Upper lobe of right lung (tissue), 1 donor: ENCODE measurements at regions of chr16 and their contacts with region 1.

Region 1: GRCh38 chr16:81737885-81738786 is 41.0 kb upstream of the PLCG2 start:
- DNase-seq: peak; percentile 83
- ATAC-seq: peak; percentile 95
- H3K4me3 ChIP-seq: peak overlapping the region; percentile 26
- H3K27ac ChIP-seq: no peak overlapping the region
- H3K4me1 ChIP-seq: peaks cover 9% of the 10 kb centered on the region
- H3K27me3 ChIP-seq: no peaks in the 10 kb centered on the region
- CTCF ChIP-seq: peak; percentile 82

Region 2: DNA sequence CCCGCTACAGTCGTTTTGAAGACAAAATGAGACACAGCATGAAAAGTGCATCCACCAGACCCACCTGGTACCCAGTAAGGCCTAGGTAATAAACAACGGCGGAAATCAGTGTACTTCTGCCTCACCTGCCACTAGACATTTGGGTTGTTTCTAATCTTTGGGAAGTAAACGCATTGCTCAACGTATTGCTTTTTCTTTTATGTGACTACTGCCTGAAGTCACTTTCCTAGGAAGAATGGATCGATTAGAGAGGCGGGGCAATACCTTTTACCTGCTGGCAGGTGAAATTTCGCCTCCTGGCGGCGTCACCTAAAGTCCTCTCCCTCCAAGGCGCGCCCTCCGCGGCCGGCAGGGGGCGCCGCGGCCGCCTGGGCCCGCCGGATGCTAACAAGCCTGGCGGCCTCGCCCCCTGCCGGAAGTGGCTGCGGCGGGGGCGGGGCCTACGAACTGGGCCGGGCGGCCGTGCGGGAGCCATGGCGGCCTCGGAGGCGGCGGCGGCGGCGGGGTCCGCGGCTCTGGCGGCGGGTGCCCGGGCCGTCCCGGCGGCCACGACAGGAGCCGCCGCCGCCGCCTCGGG is 702.6 kb before region 1 on chr16 and contains the start of gene ATMIN:
- intact Hi-C with region 1: loop called (anchors 10 kb)
- DNase-seq: peak; percentile 93
- ATAC-seq: peak; percentile 100
- H3K4me3 ChIP-seq: peak within 1 kb of the TSS; percentile 73
- H3K27ac ChIP-seq: peak within 1 kb of the TSS; percentile 60
- H3K4me1 ChIP-seq: peaks cover 19% of the 10 kb centered on the region
- H3K27me3 ChIP-seq: no peaks in the 10 kb centered on the region
- CTCF ChIP-seq: peak; percentile 93
- total RNA-seq, gene ATMIN: 33.5 TPM

Region 3: GRCh38 chr16:81645266-81645694 is 92.9 kb before region 1 on chr16:
- intact Hi-C with region 1: no loop called
- DNase-seq: no peak
- ATAC-seq: peak; percentile 72
- H3K4me3 ChIP-seq: no peak overlapping the region
- H3K27ac ChIP-seq: no peak overlapping the region
- H3K4me1 ChIP-seq: peaks cover 11% of the 10 kb centered on the region
- H3K27me3 ChIP-seq: no peaks in the 10 kb centered on the region
- CTCF ChIP-seq: no peak